ENCODE measurements at regions of chrX and their contacts with region 1.

Region 1: DNA sequence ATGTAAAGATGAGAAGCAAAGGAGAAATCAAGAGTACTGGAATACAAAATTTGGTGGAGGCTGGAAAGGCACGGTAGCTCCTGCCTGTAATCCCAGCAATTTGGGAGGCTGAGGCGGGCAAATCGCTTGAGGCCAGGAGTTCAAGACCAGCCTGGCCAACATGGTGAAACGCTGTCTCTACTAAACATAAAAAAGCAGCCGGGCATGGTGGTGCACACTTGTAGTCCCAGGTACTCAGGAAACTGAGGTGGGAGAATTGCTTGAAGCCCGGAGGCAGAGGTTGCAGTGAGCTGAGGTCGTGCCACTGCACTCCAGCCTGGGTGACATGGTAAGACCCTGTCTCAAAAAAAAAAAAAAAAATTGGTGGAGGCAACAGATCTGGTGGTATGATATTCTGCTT is 1086.0 kb downstream of the NLGN4X start:
- DNase-seq: no peak
- ATAC-seq: no peak
- H3K4me3 ChIP-seq: no peak overlapping the region
- H3K27ac ChIP-seq: no peak overlapping the region
- H3K4me1 ChIP-seq: no peaks in the 10 kb centered on the region
- H3K27me3 ChIP-seq: no peaks in the 10 kb centered on the region
- CTCF ChIP-seq: no peak
- POLR2A ChIP-seq: no peak
- RAD21 ChIP-seq: no peak

Region 2: GRCh38 chrX:4994855-4995254 is 147.8 kb before region 1 on chrX:
- CTCF ChIA-PET with region 1: no interaction called
- POLR2A ChIA-PET with region 1: no interaction called
- dilution Hi-C with region 1: no loop called
- in situ Hi-C with region 1: no loop called
- intact Hi-C with region 1: no loop called
- DNase-seq: no peak
- ATAC-seq: no peak
- H3K4me3 ChIP-seq: no peak overlapping the region
- H3K27ac ChIP-seq: no peak overlapping the region
- H3K4me1 ChIP-seq: no peaks in the 10 kb centered on the region
- H3K27me3 ChIP-seq: no peaks in the 10 kb centered on the region
- CTCF ChIP-seq: no peak
- POLR2A ChIP-seq: no peak
- RAD21 ChIP-seq: no peak

Region 3: DNA sequence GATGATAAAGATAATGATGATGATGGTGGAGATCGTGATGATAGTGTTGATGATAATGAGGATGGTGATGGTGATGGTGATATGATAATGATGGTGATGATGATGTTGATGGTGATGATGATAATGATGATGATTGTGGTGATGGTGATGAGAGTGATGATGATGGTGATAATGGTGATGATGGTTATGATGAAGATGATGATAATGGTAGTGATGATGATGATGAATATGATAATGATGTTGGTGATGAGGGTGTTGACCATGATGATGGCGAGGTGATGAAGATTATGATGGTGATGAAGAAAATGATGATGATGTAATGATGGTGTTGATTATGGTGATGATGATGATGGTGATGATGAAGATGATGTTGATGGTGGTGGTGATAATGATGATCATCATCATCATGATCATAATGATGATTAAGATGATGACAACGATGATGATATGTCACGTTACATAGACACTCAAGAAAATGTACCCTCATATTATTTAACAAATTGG is 20.4 kb before region 1 on chrX:
- CTCF ChIA-PET with region 1: no interaction called
- POLR2A ChIA-PET with region 1: no interaction called
- dilution Hi-C with region 1: no loop called
- in situ Hi-C with region 1: no loop called
- intact Hi-C with region 1: loop called (anchors 2 kb)
- DNase-seq: no peak
- ATAC-seq: no peak
- H3K4me3 ChIP-seq: no peak overlapping the region
- H3K27ac ChIP-seq: no peak overlapping the region
- H3K4me1 ChIP-seq: no peaks in the 10 kb centered on the region
- H3K27me3 ChIP-seq: no peaks in the 10 kb centered on the region
- CTCF ChIP-seq: no peak
- POLR2A ChIP-seq: no peak
- RAD21 ChIP-seq: no peak

Region 4: GRCh38 chrX:5242091-5242790 is 99.6 kb after region 1 on chrX:
- CTCF ChIA-PET with region 1: no interaction called
- POLR2A ChIA-PET with region 1: no interaction called
- dilution Hi-C with region 1: no loop called
- in situ Hi-C with region 1: no loop called
- intact Hi-C with region 1: no loop called
- DNase-seq: no peak
- ATAC-seq: no peak
- H3K4me3 ChIP-seq: no peak overlapping the region
- H3K27ac ChIP-seq: no peak overlapping the region
- H3K4me1 ChIP-seq: no peaks in the 10 kb centered on the region
- H3K27me3 ChIP-seq: no peaks in the 10 kb centered on the region
- CTCF ChIP-seq: no peak
- POLR2A ChIP-seq: no peak
- RAD21 ChIP-seq: no peak

Measured in IMR-90 (cell line).